ENCODE measurements at regions of chr3 and their contacts with region 1.

Region 1: GRCh38 chr3:16290007-16290826 is 25.2 kb downstream of the OXNAD1 start:
- DNase-seq: peak in 11 of 14 experiments; percentile 35 to 80 (median 58)
- ATAC-seq: peak; percentile 12
- H3K4me3 ChIP-seq: peak overlapping the region; percentile 91
- H3K4me3 Mint-ChIP-seq: peak overlapping the region; percentile 95
- H3K27ac ChIP-seq: peak overlapping the region; percentile 65 to 88
- H3K27ac Mint-ChIP-seq: peak overlapping the region; percentile 92
- H3K4me1 ChIP-seq: peaks cover 46% of the 10 kb centered on the region
- H3K4me1 Mint-ChIP-seq: peaks cover 73% of the 10 kb centered on the region
- H3K27me3 ChIP-seq: no peaks in the 10 kb centered on the region
- H3K27me3 Mint-ChIP-seq: no peaks in the 10 kb centered on the region
- CTCF ChIP-seq: peak; percentile 97

Region 2: DNA sequence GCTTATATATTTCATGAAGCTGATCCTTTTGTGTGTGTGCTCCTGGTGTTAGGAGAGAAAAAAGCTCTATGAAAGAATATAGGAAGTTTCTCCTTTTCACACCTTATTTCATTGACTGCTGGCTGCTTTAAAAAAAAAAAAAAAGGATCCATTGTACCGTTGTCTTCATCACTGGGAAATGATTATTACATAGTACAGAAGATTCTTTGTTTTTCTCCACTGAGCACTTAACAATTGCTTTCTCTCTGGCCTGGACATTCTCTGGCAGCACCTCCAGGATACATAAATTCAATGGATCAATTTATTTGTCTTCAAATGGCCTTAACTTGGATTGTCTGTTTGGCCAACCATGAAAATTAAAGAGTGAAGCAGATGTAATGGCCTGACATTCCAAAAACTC is 62.7 kb before region 1 on chr3:
- CTCF ChIA-PET with region 1: no interaction called
- POLR2A ChIA-PET with region 1: no interaction called
- intact Hi-C with region 1: no loop called
- DNase-seq: no peak
- ATAC-seq: no peak
- H3K4me3 ChIP-seq: no peak overlapping the region
- H3K4me3 Mint-ChIP-seq: no peak overlapping the region
- H3K27ac ChIP-seq: no peak overlapping the region
- H3K27ac Mint-ChIP-seq: no peak overlapping the region
- H3K4me1 ChIP-seq: no peaks in the 10 kb centered on the region
- H3K4me1 Mint-ChIP-seq: no peaks in the 10 kb centered on the region
- H3K27me3 ChIP-seq: peaks cover 0 to 4% of the 10 kb centered on the region in 2 experiments
- H3K27me3 Mint-ChIP-seq: peaks cover 3% of the 10 kb centered on the region
- CTCF ChIP-seq: no peak

Region 3: DNA sequence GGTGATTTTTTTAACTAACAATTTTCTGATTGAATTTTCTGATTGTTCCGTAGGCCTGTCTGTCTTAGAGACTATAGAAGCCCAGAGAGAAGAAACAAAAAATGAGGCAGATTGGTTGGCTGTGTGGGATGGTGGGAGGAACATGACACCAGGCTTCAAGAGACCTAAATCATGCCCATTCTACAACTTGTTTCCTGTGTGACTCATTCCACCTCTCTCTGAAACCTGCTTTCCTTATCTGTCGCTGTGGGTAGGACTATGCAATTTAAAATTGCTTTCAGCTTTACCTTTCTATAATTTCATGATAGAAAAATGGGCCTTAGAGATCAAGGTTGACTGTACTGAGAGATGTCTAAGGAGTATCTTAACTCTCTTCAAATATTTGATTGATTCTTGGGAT is 19.3 kb after region 1 on chr3:
- CTCF ChIA-PET with region 1: interaction called, 208 read pairs
- POLR2A ChIA-PET with region 1: interaction called, 211 read pairs
- intact Hi-C with region 1: loop called in 1 of 2 experiments (anchors 2 kb)
- DNase-seq: peak in 9 of 14 experiments; percentile 32 to 88 (median 52)
- ATAC-seq: peak; percentile 69
- H3K4me3 ChIP-seq: no peak overlapping the region
- H3K4me3 Mint-ChIP-seq: peak overlapping the region; percentile 83
- H3K27ac ChIP-seq: peak overlapping the region; percentile 63 to 67
- H3K27ac Mint-ChIP-seq: peak overlapping the region; percentile 94
- H3K4me1 ChIP-seq: peaks cover 78% of the 10 kb centered on the region
- H3K4me1 Mint-ChIP-seq: peaks cover 94% of the 10 kb centered on the region
- H3K27me3 ChIP-seq: no peaks in the 10 kb centered on the region
- H3K27me3 Mint-ChIP-seq: no peaks in the 10 kb centered on the region
- CTCF ChIP-seq: no peak

Region 4: GRCh38 chr3:16338999-16339398 is 48.8 kb after region 1 on chr3:
- CTCF ChIA-PET with region 1: interaction called, 8 read pairs
- POLR2A ChIA-PET with region 1: interaction called, 12 read pairs
- intact Hi-C with region 1: no loop called
- DNase-seq: peak in 4 of 14 experiments; percentile 32 to 70 (median 62)
- ATAC-seq: peak; percentile 65
- H3K4me3 ChIP-seq: no peak overlapping the region
- H3K4me3 Mint-ChIP-seq: peak overlapping the region; percentile 70
- H3K27ac ChIP-seq: peak overlapping the region; percentile 47 to 66
- H3K27ac Mint-ChIP-seq: peak overlapping the region; percentile 82
- H3K4me1 ChIP-seq: peaks cover 43% of the 10 kb centered on the region
- H3K4me1 Mint-ChIP-seq: peaks cover 81% of the 10 kb centered on the region
- H3K27me3 ChIP-seq: no peaks in the 10 kb centered on the region
- H3K27me3 Mint-ChIP-seq: no peaks in the 10 kb centered on the region
- CTCF ChIP-seq: no peak

Region 5: GRCh38 chr3:16550676-16551341 is 260.6 kb after region 1 on chr3:
- CTCF ChIA-PET with region 1: interaction called, 16 read pairs
- POLR2A ChIA-PET with region 1: interaction called, 3 read pairs
- intact Hi-C with region 1: loop called (anchors 1 kb)
- DNase-seq: peak; percentile 43 to 90 (median 62)
- ATAC-seq: peak; percentile 100
- H3K4me3 ChIP-seq: no peak overlapping the region
- H3K4me3 Mint-ChIP-seq: no peak overlapping the region
- H3K27ac ChIP-seq: no peak overlapping the region
- H3K27ac Mint-ChIP-seq: peak overlapping the region; percentile 16
- H3K4me1 ChIP-seq: peaks cover 5% of the 10 kb centered on the region
- H3K4me1 Mint-ChIP-seq: no peaks in the 10 kb centered on the region
- H3K27me3 ChIP-seq: no peaks in the 10 kb centered on the region
- H3K27me3 Mint-ChIP-seq: peaks cover 4% of the 10 kb centered on the region
- CTCF ChIP-seq: peak; percentile 91